ENCODE measurements at regions of chr17 and their contacts with region 1.

Region 1: DNA sequence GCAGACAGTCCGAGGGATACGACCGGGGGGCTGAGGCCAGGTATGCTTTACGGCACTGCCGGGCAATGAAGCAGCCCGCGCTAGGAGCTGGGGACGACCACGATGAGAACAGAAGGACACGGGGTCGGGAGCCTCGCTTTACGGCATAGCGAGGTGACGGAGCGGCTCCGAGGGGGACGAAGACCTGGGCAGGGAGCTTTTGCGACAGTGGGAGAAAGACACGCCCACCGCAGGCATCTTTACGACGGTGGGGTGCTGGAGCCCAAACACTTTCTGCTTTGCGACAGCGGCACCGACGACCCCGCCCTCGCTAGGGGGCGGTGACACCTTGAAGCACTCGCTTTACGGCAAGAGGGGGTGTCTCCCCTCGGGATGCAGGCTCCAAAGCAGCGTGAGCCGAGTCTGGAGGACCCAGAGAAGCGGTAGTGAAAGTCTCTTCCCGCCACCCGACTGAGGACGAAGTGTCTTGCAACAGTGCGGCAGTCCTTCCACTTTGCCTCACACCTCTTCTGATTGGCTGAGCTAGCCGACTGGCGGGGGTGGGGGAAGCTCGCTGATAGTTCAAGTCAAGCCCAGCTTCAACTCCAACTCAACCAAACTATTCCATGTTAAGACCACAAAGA is 350 bp upstream of the NEURL4 start:
- DNase-seq: peak; percentile 84 to 98 (median 98)
- ATAC-seq: peak; percentile 91
- H3K4me3 ChIP-seq: peak overlapping the region; percentile 95
- H3K4me3 Mint-ChIP-seq: peak overlapping the region; percentile 89 to 100 (median 96)
- H3K27ac ChIP-seq: peak overlapping the region; percentile 88
- H3K27ac Mint-ChIP-seq: peak overlapping the region; percentile 93 to 99 (median 97)
- H3K4me1 ChIP-seq: peaks cover 15 to 36% of the 10 kb centered on the region in 2 donors
- H3K4me1 Mint-ChIP-seq: peaks cover 29 to 61% (median 44%) of the 10 kb centered on the region in 7 donors
- H3K27me3 ChIP-seq: no peaks in the 10 kb centered on the region
- H3K27me3 Mint-ChIP-seq: no peaks in the 10 kb centered on the region

Region 2: GRCh38 chr17:7314719-7315569 is 14.5 kb before region 1 on chr17 and contains the start of gene GPS2:
- CTCF ChIA-PET with region 1: interaction called, 11 read pairs
- POLR2A ChIA-PET with region 1: interaction called, 336 read pairs
- intact Hi-C with region 1: loop called (anchors 1 kb)
- DNase-seq: peak; percentile 90 to 95 (median 93)
- ATAC-seq: peak; percentile 88
- H3K4me3 ChIP-seq: peak within 1 kb of the TSS; percentile 85
- H3K4me3 Mint-ChIP-seq: peak within 1 kb of the TSS; percentile 85 to 96 (median 90)
- H3K27ac ChIP-seq: peak within 1 kb of the TSS; percentile 87
- H3K27ac Mint-ChIP-seq: peak within 1 kb of the TSS; percentile 85 to 97 (median 95)
- H3K4me1 ChIP-seq: peaks cover 30 to 35% of the 10 kb centered on the region in 2 donors
- H3K4me1 Mint-ChIP-seq: peaks cover 36 to 63% (median 54%) of the 10 kb centered on the region in 7 donors
- H3K27me3 ChIP-seq: no peaks in the 10 kb centered on the region
- H3K27me3 Mint-ChIP-seq: no peaks in the 10 kb centered on the region
- total RNA-seq, gene GPS2: 72.6 to 145 (median 107) TPM

Region 3: GRCh38 chr17:7344399-7344798 is 14.9 kb after region 1 on chr17:
- CTCF ChIA-PET with region 1: interaction called, 53 read pairs
- POLR2A ChIA-PET with region 1: interaction called, 98 read pairs
- intact Hi-C with region 1: loop called (anchors 1 kb)
- DNase-seq: no peak
- ATAC-seq: no peak
- H3K4me3 ChIP-seq: no peak overlapping the region
- H3K4me3 Mint-ChIP-seq: no peak overlapping the region
- H3K27ac ChIP-seq: no peak overlapping the region
- H3K27ac Mint-ChIP-seq: peak overlapping the region in 5 of 9 donors; percentile 29 to 89 (median 52)
- H3K4me1 ChIP-seq: peaks cover 6 to 8% of the 10 kb centered on the region in 2 donors
- H3K4me1 Mint-ChIP-seq: peaks cover 23 to 44% (median 37%) of the 10 kb centered on the region in 7 donors
- H3K27me3 ChIP-seq: no peaks in the 10 kb centered on the region
- H3K27me3 Mint-ChIP-seq: no peaks in the 10 kb centered on the region